ENCODE measurements at regions of chr12 and their contacts with region 1.

Region 1: GRCh38 chr12:64181504-64182291 is 40.4 kb downstream of the KICS2 start:
- DNase-seq: peak in 3 of 6 donors; percentile 31 to 64 (median 40)
- ATAC-seq: peak; percentile 89 to 96 (median 94)
- H3K4me3 ChIP-seq: no peak overlapping the region
- H3K27ac ChIP-seq: peak overlapping the region in 2 of 4 donors; percentile 2 to 54
- H3K4me1 ChIP-seq: peaks cover 0 to 4% (median 0%) of the 10 kb centered on the region in 3 donors
- H3K27me3 ChIP-seq: no peaks in the 10 kb centered on the region
- CTCF ChIP-seq: peak in 3 of 4 donors; percentile 27 to 57 (median 36)

Region 2: DNA sequence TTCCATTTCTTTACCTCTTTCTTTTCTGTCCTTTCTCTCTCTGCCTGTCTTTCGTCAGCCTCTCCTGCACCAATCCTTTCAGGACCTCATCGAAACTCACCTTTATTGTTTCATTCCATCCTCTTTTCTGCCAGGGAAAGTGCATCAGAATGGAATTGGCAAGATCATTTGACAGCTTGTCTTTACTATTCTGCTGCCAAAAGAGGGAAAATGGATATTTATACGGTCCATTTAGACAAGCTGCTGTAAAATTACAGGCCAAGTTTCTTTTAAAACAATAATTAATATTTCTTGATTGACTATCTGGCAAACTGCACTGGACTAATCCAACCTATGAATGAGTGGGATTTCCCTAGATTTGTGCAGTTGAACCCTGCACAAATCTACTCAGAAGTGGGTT is 344.8 kb before region 1 on chr12:
- intact Hi-C with region 1: loop called in 2 of 3 experiments (anchors 5 to 10 kb)
- DNase-seq: no peak
- ATAC-seq: no peak
- H3K4me3 ChIP-seq: no peak overlapping the region
- H3K27ac ChIP-seq: no peak overlapping the region
- H3K4me1 ChIP-seq: no peaks in the 10 kb centered on the region
- H3K27me3 ChIP-seq: no peaks in the 10 kb centered on the region
- CTCF ChIP-seq: no peak

Region 3: DNA sequence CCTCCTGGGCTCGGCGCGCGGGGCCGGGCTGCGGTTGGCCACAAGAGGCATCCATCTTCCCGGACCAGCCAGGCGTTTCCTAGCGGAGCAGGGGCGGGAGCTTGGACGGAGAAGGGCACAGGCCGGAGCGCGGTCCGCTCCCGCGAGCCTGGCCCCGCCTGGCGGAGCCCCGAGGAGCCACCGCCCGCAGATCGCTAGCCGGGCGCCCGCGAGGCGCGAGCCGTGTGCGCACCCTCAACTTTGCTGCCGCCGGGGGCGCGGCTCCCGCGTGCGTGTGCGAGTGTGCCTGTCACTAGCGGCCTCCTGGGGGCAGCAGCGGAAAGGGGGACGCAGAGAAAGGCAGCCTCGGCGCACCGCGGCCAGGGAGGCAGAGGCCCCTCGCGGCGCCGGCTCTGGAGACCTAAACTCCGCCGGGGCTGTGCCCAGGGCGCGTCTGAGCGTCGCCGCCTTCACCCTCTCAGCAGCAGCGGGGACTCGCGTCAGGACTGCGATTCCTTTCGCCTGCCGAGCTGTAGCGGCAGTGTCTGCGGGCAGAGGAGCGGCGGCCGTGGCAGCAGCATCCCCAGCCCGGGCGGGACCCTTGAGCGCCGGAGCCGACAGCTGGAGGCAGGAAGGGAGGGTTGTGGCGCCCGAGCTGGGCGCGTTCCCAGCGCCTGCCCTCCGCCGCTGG is 337.8 kb before region 1 on chr12:
- intact Hi-C with region 1: loop called in 2 of 3 experiments (anchors 5 to 10 kb)
- DNase-seq: peak; percentile 89 to 96 (median 93)
- ATAC-seq: peak; percentile 88 to 94 (median 91)
- H3K4me3 ChIP-seq: peak overlapping the region; percentile 57 to 98 (median 96)
- H3K27ac ChIP-seq: peak overlapping the region; percentile 87 to 92 (median 90)
- H3K4me1 ChIP-seq: peaks cover 0 to 7% (median 3%) of the 10 kb centered on the region in 3 donors
- H3K27me3 ChIP-seq: no peaks in the 10 kb centered on the region
- CTCF ChIP-seq: peak; percentile 84 to 97 (median 94)

Region 4: DNA sequence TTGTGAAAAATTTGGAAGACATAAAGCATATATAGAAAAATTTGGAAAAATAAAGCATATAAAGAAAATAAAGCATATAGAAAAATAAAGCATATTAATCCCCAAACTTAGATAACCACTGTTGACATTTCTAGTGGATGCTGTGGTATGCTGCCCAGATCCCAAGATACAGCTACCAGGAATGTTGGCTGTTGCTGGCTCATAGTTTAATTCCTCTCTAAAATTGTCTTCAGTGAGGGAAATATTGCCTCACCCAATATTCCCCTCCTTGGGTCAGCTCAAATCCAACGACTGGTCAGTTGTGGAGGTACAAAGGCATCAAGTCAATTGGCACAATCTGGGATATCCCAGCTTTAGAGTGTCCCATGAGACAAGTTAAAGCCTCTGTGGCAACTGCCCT is 50.5 kb after region 1 on chr12:
- intact Hi-C with region 1: no loop called
- DNase-seq: no peak
- ATAC-seq: no peak
- H3K4me3 ChIP-seq: no peak overlapping the region
- H3K27ac ChIP-seq: no peak overlapping the region
- H3K4me1 ChIP-seq: no peaks in the 10 kb centered on the region
- H3K27me3 ChIP-seq: no peaks in the 10 kb centered on the region
- CTCF ChIP-seq: no peak

Region 5: DNA sequence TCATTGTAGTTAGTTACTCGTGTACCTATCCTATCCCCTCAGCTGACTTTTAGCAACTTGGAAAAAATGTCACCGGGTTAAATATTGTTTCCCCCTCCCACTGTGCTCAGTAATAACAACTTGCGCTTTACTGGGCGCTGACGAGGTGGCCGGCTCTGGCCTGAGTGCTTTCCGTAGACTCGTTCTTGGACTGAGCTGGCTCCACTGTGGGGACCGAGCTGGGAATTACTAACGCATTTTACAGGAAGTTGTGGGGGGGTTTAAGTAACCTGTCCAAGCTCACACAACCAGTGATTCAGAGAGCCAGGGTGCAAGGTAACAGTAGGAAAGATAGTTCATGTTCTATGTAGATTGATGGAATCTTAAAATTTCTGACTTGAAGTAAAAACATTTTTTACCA is 122.9 kb after region 1 on chr12:
- intact Hi-C with region 1: no loop called
- DNase-seq: no peak
- ATAC-seq: no peak
- H3K4me3 ChIP-seq: no peak overlapping the region
- H3K27ac ChIP-seq: no peak overlapping the region
- H3K4me1 ChIP-seq: no peaks in the 10 kb centered on the region
- H3K27me3 ChIP-seq: no peaks in the 10 kb centered on the region
- CTCF ChIP-seq: no peak

Region 6: DNA sequence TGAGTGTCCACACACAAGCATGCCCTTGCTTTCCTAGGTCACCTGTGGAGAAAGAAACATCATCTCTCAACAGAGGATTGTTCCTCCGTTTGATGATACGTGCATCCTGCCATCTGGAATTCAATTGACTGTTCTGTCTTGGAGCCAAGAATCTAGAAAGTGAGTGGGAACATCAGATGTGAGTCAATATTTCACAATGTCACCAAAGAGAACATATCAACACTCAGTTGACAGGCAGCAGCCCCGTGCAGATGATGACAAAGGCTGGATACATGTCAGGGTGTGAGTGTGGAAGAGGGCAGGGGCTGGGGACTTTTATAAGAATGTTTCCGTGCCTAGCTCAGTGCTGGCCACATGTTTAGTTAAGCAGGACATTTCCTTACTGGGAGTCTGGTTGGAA is 718.8 kb after region 1 on chr12:
- intact Hi-C with region 1: no loop called
- DNase-seq: no peak
- ATAC-seq: no peak
- H3K4me3 ChIP-seq: no peak overlapping the region
- H3K27ac ChIP-seq: no peak overlapping the region
- H3K4me1 ChIP-seq: no peaks in the 10 kb centered on the region
- H3K27me3 ChIP-seq: no peaks in the 10 kb centered on the region
- CTCF ChIP-seq: no peak

Measured in pancreas (tissue), 10 donors.